ENCODE measurements at regions of chr20 and their contacts with region 1.

Region 1: DNA sequence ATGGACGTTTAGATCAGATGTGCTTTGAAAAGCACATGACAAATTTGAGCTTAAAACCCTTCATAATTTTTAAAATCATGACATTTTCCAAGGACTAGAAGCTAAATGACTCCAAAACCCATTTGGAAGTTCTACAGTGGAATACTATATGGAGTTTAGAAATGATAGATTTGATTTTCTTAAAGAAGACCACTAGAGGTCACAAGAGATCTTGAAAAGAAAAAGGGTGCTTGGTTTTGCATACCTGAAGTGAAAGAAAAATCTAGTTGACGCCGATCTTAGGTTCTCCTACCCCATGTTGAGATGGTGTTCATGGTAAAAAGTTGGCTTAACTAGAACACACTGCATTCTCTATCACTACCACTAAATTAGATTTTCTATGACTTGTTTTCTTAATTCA is 31.5 kb downstream of the CFAP61 start:
- DNase-seq: peak in 2 of 9 experiments; percentile 34 to 62
- ATAC-seq: peak; percentile 65
- H3K4me3 ChIP-seq: no peak overlapping the region
- H3K4me3 Mint-ChIP-seq: peak overlapping the region; percentile 69
- H3K27ac ChIP-seq: no peak overlapping the region
- H3K27ac Mint-ChIP-seq: no peak overlapping the region
- H3K4me1 ChIP-seq: no peaks in the 10 kb centered on the region
- H3K4me1 Mint-ChIP-seq: peaks cover 8% of the 10 kb centered on the region
- H3K27me3 ChIP-seq: no peaks in the 10 kb centered on the region
- H3K27me3 Mint-ChIP-seq: peaks cover 13% of the 10 kb centered on the region
- CTCF ChIP-seq: peak; percentile 64

Region 2: DNA sequence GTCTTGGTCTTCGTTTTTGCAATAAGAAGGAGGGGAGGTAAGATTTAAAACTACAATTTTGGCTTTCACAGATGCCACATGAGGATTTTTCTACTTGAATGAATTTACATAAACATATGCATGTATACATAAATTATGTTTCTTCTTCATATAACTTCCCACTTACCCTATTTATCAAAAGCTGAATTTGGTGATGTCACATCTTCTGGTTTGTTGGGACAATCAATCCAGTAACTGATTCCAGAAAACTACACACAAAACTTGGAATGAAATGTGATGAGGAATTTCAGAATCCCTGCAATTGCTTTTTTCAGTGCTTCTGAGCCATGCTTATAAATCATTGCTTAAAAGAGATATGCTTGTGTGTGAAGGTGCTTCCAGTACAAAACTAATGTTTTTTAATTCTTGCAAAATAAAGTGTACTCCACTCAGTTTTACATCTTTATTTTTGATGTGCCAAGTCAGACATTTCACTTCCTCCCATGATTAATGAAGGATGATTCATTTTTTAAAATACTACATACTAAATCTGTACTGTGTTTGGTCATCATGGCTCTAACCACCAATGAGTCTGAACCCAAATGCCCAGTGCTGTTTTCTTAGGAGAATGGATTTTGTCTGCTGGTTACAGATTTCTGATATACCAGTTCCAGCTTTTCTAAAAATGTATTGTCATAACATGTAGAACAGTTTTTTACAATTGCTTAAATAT is 357.8 kb before region 1 on chr20:
- CTCF ChIA-PET with region 1: no interaction called
- POLR2A ChIA-PET with region 1: no interaction called
- intact Hi-C with region 1: no loop called
- DNase-seq: no peak
- ATAC-seq: no peak
- H3K4me3 ChIP-seq: no peak overlapping the region
- H3K4me3 Mint-ChIP-seq: no peak overlapping the region
- H3K27ac ChIP-seq: no peak overlapping the region
- H3K27ac Mint-ChIP-seq: no peak overlapping the region
- H3K4me1 ChIP-seq: no peaks in the 10 kb centered on the region
- H3K4me1 Mint-ChIP-seq: no peaks in the 10 kb centered on the region
- H3K27me3 ChIP-seq: no peaks in the 10 kb centered on the region
- H3K27me3 Mint-ChIP-seq: no peaks in the 10 kb centered on the region
- CTCF ChIP-seq: no peak

Region 3: DNA sequence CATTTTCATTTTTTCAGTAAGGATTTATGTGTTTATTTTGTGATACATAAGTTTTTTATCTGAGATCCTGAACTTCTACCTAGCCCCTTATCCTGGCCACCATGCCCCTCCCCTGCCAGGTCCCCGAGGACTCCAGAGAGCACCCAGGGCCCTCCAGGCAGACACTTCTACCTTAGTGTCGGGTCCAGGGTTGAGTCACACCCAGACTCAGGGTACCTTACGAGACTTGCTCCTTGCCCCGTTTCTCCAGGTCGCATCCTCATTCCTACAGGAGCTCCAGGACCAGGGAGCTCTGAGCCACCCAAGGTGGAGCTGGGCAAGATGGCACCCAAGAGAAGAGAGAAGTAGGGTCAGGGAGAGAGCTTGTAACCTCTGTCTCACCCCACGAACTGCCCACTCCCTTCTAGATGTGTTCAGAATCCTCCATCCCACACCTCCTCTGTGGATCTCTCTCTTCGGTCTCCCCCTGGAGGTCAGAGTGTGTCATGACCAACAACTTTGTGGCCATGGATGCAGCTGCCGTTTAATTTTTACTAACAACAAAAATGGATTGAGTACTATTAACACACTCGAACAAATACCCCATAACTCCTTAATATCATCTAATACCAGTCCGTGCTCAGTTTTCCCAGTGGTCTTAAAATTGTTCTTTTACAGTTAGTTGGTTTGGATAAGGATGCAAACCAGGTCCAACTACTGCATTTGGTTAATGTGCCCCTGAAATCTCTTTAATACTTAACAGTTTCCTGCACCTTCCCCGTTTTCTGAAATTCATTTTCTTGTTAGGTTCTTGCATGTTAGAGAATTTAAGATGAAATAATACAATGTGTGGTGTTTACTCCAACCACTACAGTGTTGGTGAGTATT is 153.5 kb after region 1 on chr20:
- CTCF ChIA-PET with region 1: interaction called, 13 read pairs
- POLR2A ChIA-PET with region 1: no interaction called
- intact Hi-C with region 1: loop called in 1 of 2 experiments (anchors 1 kb)
- DNase-seq: peak in 4 of 9 experiments; percentile 20 to 64 (median 36)
- ATAC-seq: peak; percentile 31
- H3K4me3 ChIP-seq: no peak overlapping the region
- H3K4me3 Mint-ChIP-seq: no peak overlapping the region
- H3K27ac ChIP-seq: no peak overlapping the region
- H3K27ac Mint-ChIP-seq: no peak overlapping the region
- H3K4me1 ChIP-seq: no peaks in the 10 kb centered on the region
- H3K4me1 Mint-ChIP-seq: no peaks in the 10 kb centered on the region
- H3K27me3 ChIP-seq: no peaks in the 10 kb centered on the region
- H3K27me3 Mint-ChIP-seq: peaks cover 3% of the 10 kb centered on the region
- CTCF ChIP-seq: peak; percentile 46

Region 4: GRCh38 chr20:20568604-20569205 is 484.9 kb after region 1 on chr20:
- CTCF ChIA-PET with region 1: interaction called, 3 read pairs
- POLR2A ChIA-PET with region 1: no interaction called
- intact Hi-C with region 1: loop called (anchors 1 kb)
- DNase-seq: peak in 3 of 9 experiments; percentile 15 to 52 (median 39)
- ATAC-seq: no peak
- H3K4me3 ChIP-seq: no peak overlapping the region
- H3K4me3 Mint-ChIP-seq: no peak overlapping the region
- H3K27ac ChIP-seq: no peak overlapping the region
- H3K27ac Mint-ChIP-seq: no peak overlapping the region
- H3K4me1 ChIP-seq: no peaks in the 10 kb centered on the region
- H3K4me1 Mint-ChIP-seq: no peaks in the 10 kb centered on the region
- H3K27me3 ChIP-seq: no peaks in the 10 kb centered on the region
- H3K27me3 Mint-ChIP-seq: no peaks in the 10 kb centered on the region
- CTCF ChIP-seq: peak; percentile 59

Region 5: DNA sequence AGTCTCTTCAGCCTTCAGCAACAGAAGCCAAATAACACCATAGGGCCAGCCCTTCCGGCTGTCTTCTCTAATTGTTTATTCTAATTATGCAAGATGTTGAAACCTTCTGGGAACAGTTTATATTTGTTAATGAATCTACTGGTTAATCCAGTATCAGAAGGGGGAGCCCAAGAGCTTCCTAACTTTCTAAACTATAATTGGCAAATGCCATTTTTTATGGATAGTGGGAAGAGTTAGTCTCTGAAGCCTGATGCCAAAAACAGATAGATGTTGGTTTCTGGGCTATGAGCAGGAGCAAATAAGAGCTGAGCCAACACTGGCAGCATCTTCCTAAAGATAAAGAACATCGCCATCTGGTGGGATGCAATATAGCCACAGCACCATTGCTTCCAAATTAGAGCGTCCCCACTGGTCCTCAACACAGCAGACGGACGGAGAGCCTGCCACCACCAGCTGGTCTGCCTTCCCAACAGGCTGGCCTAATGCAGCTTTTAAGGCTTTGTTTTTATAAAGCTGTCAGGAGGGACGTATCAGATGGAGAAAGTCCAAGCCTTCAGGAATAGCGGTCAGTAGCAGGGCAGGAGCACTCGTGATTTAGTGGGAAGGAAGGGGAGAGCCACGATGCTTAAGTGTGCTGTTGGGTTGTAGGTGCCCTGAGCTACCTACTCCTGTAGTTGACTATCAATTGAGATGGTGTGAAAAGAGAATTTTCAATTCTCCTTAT is 509.8 kb after region 1 on chr20:
- CTCF ChIA-PET with region 1: interaction called, 21 read pairs
- POLR2A ChIA-PET with region 1: no interaction called
- intact Hi-C with region 1: loop called (anchors 2 kb)
- DNase-seq: peak in 2 of 9 experiments; percentile 19 to 33
- ATAC-seq: no peak
- H3K4me3 ChIP-seq: no peak overlapping the region
- H3K4me3 Mint-ChIP-seq: no peak overlapping the region
- H3K27ac ChIP-seq: no peak overlapping the region
- H3K27ac Mint-ChIP-seq: no peak overlapping the region
- H3K4me1 ChIP-seq: no peaks in the 10 kb centered on the region
- H3K4me1 Mint-ChIP-seq: no peaks in the 10 kb centered on the region
- H3K27me3 ChIP-seq: no peaks in the 10 kb centered on the region
- H3K27me3 Mint-ChIP-seq: no peaks in the 10 kb centered on the region
- CTCF ChIP-seq: no peak

Measured in CD8-positive, alpha-beta T cell (primary cell).